Activated B cell treated with CpG ODN at 0.5 μM for 24 hours (primary cell): ENCODE measurements at regions of chr12 and their contacts with region 1.

Region 1: GRCh38 chr12:121536899-121537813 is 43.7 kb downstream of the KDM2B start:
- DNase-seq: peak; percentile 79
- ATAC-seq: peak; percentile 45
- H3K4me3 Mint-ChIP-seq: peak overlapping the region; percentile 91
- H3K27ac Mint-ChIP-seq: peak overlapping the region; percentile 93
- H3K4me1 Mint-ChIP-seq: peaks cover 64% of the 10 kb centered on the region
- H3K27me3 Mint-ChIP-seq: no peaks in the 10 kb centered on the region
- CTCF ChIP-seq: no peak

Region 2: GRCh38 chr12:121461048-121461447 is 76.1 kb before region 1 on chr12:
- CTCF ChIA-PET with region 1: no interaction called
- POLR2A ChIA-PET with region 1: interaction called, 16 read pairs
- intact Hi-C with region 1: no loop called
- DNase-seq: no peak
- ATAC-seq: no peak
- H3K4me3 Mint-ChIP-seq: no peak overlapping the region
- H3K27ac Mint-ChIP-seq: no peak overlapping the region
- H3K4me1 Mint-ChIP-seq: peaks cover 60% of the 10 kb centered on the region
- H3K27me3 Mint-ChIP-seq: no peaks in the 10 kb centered on the region
- CTCF ChIP-seq: no peak

Region 3: DNA sequence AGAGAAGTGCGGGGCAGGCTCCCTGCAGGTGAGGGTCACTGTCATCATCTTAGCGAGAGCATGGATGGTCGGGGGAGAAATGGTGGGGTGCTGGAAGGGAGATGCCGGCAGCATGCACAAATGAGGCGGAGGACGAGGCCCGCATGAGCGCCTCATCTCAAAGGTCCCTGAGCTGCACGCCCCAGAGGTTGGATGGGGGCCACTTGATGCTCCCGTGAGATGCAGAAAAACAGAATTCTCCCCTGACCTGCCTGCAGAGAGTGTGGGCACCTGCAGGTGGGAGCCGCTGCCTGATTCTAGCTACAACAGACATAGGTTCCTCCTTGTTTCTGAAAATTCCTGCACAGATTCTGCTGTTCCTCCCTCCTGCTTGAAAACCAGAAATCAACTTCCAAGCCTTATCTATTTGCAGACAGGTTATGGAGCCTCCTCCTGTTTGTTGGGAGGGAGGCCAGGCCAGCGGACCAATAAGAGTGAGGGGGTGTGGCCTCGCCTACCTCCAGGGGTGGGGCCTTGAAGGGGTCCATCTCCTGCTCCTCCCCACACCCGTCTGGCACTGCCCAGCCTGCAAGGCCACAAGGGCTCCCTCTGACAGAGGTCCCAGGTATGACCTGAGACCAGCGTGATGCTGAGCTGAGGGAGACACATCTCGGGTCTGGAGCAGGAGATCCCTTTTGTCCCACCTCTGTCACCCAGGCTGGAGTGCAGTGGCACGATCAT is 23.5 kb before region 1 on chr12:
- CTCF ChIA-PET with region 1: no interaction called
- POLR2A ChIA-PET with region 1: interaction called, 19 read pairs
- intact Hi-C with region 1: loop called (anchors 1 kb)
- DNase-seq: no peak
- ATAC-seq: peak; percentile 57
- H3K4me3 Mint-ChIP-seq: peak overlapping the region; percentile 35
- H3K27ac Mint-ChIP-seq: peak overlapping the region; percentile 86
- H3K4me1 Mint-ChIP-seq: peaks cover 23% of the 10 kb centered on the region
- H3K27me3 Mint-ChIP-seq: no peaks in the 10 kb centered on the region
- CTCF ChIP-seq: no peak

Region 4: GRCh38 chr12:121560392-121561008 is 23.3 kb after region 1 on chr12:
- CTCF ChIA-PET with region 1: interaction called, 3 read pairs
- POLR2A ChIA-PET with region 1: interaction called, 85 read pairs
- intact Hi-C with region 1: loop called (anchors 1 kb)
- DNase-seq: peak; percentile 58
- ATAC-seq: peak; percentile 79
- H3K4me3 Mint-ChIP-seq: peak overlapping the region; percentile 84
- H3K27ac Mint-ChIP-seq: peak overlapping the region; percentile 97
- H3K4me1 Mint-ChIP-seq: peaks cover 55% of the 10 kb centered on the region
- H3K27me3 Mint-ChIP-seq: no peaks in the 10 kb centered on the region
- CTCF ChIP-seq: no peak

Region 5: DNA sequence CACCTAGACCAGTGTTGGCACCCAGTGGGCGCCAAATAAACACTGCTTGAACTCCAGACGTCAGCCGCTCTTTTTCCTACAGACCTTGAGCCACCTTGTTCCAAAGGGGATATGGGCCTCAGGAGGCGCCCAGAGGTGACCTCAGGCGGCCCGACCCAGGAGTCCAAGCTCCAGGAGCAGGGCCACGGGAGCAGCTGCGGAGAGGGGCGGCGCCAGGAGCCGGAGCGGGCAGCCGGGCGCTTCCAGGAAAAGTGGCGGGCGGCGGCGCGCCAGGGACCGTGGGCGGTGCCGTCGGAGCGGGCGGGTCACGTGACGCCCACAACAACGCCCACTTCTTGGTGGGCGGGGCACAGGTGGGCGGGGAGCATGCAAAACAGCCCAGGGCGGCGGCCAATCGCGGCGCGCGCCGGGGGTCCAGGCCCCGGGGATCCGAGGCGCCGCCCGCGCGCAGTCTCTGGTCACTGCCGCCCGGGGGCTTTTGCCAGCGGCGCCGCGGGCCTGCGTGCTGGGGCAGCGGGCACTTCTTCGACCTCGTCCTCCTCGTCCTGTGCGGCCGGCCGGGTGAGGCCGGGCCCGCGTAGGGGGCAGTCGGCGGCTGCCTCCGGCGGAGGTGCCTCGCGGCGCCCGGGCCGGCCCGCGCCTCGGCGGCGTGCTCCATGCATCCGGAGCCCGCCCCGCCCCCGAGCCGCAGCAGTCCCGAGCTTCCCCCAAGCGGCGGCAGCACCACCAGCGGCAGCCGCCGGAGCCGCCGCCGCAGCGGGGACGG is 89.1 kb after region 1 on chr12 and contains the start of gene ORAI1:
- CTCF ChIA-PET with region 1: interaction called, 5 read pairs
- POLR2A ChIA-PET with region 1: interaction called, 49 read pairs
- intact Hi-C with region 1: loop called (anchors 1 kb)
- DNase-seq: peak; percentile 98
- ATAC-seq: peak; percentile 70
- H3K4me3 Mint-ChIP-seq: peak within 1 kb of the TSS; percentile 94
- H3K27ac Mint-ChIP-seq: peak within 1 kb of the TSS; percentile 96
- H3K4me1 Mint-ChIP-seq: peaks cover 53% of the 10 kb centered on the region
- H3K27me3 Mint-ChIP-seq: no peaks in the 10 kb centered on the region
- CTCF ChIP-seq: no peak
- total RNA-seq, gene ORAI1: 85.8 and 86.3 TPM in 2 replicates

Region 6: GRCh38 chr12:121793838-121794533 is 256.8 kb after region 1 on chr12:
- CTCF ChIA-PET with region 1: no interaction called
- POLR2A ChIA-PET with region 1: interaction called, 13 read pairs
- intact Hi-C with region 1: loop called (anchors 1 kb)
- DNase-seq: peak; percentile 96
- ATAC-seq: peak; percentile 55
- H3K4me3 Mint-ChIP-seq: peak overlapping the region; percentile 85
- H3K27ac Mint-ChIP-seq: peak overlapping the region; percentile 88
- H3K4me1 Mint-ChIP-seq: peaks cover 65% of the 10 kb centered on the region
- H3K27me3 Mint-ChIP-seq: no peaks in the 10 kb centered on the region
- CTCF ChIP-seq: peak; percentile 25

Region 7: DNA sequence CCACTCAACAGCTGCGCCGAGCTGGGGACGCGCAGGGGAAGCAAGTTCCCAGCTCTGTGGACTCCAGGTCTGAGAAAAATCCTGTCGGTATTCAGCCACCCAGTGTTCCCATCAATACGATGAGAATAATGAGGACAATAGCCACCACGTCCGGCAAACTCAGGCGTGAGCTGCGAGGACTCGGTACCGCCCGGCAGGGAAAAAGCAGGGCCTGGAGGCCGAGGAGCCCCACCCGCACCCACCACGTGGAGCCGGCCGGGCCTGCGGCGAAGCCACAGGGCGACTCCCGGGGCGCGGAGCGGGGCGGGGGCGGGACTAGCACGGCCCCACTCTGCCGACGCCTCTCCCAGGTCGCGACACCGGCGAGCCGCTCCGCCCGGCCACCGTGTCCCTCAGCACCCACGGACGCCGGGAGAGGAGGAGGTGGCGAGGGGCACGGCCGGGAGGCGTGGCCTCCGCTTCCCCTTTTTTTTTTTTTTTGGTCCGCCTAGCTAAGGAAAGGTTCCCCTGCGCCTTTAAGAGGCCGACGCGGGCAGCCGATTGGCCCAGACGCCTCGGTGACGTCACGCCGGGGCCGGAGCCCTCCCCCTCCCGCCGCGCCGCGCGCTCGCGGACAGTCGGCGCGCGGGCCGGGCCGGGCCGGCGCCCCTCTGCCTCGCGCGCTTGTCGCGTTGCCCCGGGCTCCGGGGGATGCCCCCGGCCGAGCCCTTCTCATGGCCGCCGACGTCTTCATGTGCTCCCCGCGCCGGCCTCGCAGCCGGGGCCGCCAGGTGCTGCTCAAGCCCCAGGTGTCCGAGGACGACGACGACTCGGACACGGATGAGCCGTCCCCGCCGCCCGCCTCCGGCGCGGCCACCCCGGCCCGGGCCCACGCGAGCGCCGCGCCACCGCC is 541.2 kb after region 1 on chr12 and contains the start of gene MLXIP:
- CTCF ChIA-PET with region 1: no interaction called
- POLR2A ChIA-PET with region 1: no interaction called
- intact Hi-C with region 1: loop called (anchors 10 kb)
- DNase-seq: peak; percentile 89
- ATAC-seq: peak; percentile 80
- H3K4me3 Mint-ChIP-seq: peak within 1 kb of the TSS; percentile 86
- H3K27ac Mint-ChIP-seq: peak within 1 kb of the TSS; percentile 74
- H3K4me1 Mint-ChIP-seq: peaks cover 66% of the 10 kb centered on the region
- H3K27me3 Mint-ChIP-seq: no peaks in the 10 kb centered on the region
- CTCF ChIP-seq: no peak
- total RNA-seq, gene MLXIP: 26.7 and 33.7 TPM in 2 replicates